ENCODE measurements at regions of chr14 and their contacts with region 1.

Region 1: DNA sequence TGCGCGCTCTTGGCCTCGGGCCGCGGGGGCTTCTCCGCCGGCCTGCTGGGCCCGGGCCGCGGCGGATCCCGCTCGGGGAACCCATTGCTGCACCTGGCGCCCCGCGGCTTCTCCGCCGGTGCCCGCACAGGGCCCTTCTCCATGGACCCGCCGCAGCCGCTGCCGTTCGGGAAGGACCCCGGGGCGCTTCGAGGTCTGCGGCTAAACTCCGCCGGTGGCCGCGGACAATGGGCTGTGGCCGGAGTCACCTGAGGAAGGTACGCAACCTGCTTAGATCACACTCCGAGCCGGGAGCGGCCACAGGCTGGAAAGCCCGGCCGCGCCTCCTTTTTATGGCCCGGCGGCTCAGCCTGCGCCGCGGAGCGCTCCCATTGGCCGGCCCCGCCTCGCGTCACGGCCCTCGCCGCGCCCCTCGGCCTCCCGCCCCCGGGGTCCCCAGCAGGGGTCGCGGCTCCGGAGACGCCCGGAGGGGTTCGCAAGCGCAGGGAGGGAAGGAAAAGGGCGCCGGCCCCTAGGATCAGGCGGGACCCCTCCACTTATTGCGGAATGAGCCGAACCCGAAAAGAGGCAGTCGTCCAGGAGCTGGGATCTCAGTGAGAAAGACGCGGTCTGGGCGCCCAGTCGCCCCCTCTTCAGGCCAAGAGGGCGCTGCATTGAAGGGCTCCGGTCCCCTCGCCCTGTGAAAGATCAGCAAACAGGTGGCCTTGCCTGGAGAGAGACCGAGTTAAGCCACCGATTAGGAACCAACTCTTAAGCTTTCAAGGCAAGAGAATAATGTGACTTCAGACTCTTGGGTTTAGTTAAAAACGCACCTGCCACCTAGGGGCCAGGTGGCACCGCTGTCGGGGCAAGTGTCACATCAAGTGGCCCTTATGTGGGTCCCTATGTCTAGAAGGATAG is at the start of gene GCH1:
- DNase-seq: peak; percentile 95
- H3K4me3 Mint-ChIP-seq: peak within 1 kb of the TSS; percentile 90
- H3K27ac Mint-ChIP-seq: peak within 1 kb of the TSS; percentile 88
- H3K4me1 Mint-ChIP-seq: peaks cover 31% of the 10 kb centered on the region
- H3K27me3 Mint-ChIP-seq: no peaks in the 10 kb centered on the region
- total RNA-seq, gene GCH1: 49.8 and 49.9 TPM in 2 replicates

Region 2: GRCh38 chr14:54435500-54435981 is 467.2 kb before region 1 on chr14:
- intact Hi-C with region 1: loop called (anchors 5 kb)
- DNase-seq: no peak
- H3K4me3 Mint-ChIP-seq: peak overlapping the region; percentile 74
- H3K27ac Mint-ChIP-seq: peak overlapping the region; percentile 89
- H3K4me1 Mint-ChIP-seq: peaks cover 62% of the 10 kb centered on the region
- H3K27me3 Mint-ChIP-seq: no peaks in the 10 kb centered on the region

Region 3: DNA sequence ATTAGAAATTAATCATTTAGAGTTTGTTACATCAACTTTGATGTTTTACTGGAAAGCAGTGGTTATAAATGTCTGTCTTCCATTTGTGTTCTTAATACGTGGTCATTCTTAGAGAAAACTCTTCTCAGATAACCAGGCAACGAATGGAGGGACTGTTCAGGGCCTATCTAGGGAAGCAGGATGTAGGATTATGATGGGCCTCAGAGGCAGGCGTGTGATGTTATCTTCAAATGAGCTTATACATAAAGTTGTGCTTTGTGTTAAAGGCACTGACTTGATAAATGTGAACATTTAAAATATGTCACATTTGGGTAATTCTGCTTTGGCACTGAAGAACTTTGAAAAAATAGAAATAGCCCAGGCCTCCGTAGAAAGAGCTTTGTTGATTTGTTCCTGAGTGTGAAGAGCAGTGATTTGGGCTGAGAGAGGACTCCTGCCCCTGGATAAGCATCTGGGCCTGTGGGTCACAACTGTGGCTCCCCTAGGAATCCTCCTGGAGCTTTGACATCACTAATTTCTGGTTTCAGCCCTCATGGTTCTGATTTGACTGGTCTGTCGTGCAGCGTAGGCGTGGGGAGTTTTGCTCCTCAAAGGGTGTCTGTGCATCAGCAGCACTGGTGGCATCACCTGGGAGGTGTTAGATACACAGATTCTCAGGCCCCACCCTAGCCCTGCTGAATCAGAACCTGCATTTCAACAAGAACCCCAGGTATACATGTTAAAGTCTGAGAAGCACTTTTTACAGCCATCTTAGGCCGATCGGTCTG is 280.4 kb before region 1 on chr14:
- intact Hi-C with region 1: no loop called
- DNase-seq: peak; percentile 63
- H3K4me3 Mint-ChIP-seq: no peak overlapping the region
- H3K27ac Mint-ChIP-seq: no peak overlapping the region
- H3K4me1 Mint-ChIP-seq: peaks cover 28% of the 10 kb centered on the region
- H3K27me3 Mint-ChIP-seq: no peaks in the 10 kb centered on the region

Region 4: GRCh38 chr14:54730156-54730961 is 172.4 kb before region 1 on chr14:
- intact Hi-C with region 1: loop called (anchors 1 kb)
- DNase-seq: peak; percentile 84
- H3K4me3 Mint-ChIP-seq: peak overlapping the region; percentile 70
- H3K27ac Mint-ChIP-seq: peak overlapping the region; percentile 88
- H3K4me1 Mint-ChIP-seq: peaks cover 40% of the 10 kb centered on the region
- H3K27me3 Mint-ChIP-seq: peaks cover 28% of the 10 kb centered on the region

Region 5: GRCh38 chr14:55026793-55027561 is 124.2 kb after region 1 on chr14 and contains the starts of genes SOCS4 and WDHD1:
- intact Hi-C with region 1: loop called (anchors 1 kb)
- DNase-seq: peak; percentile 99
- H3K4me3 Mint-ChIP-seq: peak within 1 kb of the TSS; percentile 87
- H3K27ac Mint-ChIP-seq: peak within 1 kb of the TSS; percentile 96
- H3K4me1 Mint-ChIP-seq: peaks cover 44% of the 10 kb centered on the region
- H3K27me3 Mint-ChIP-seq: no peaks in the 10 kb centered on the region
- total RNA-seq, gene SOCS4: 36.4 and 39.6 TPM in 2 replicates
- total RNA-seq, gene WDHD1: 60.7 and 63.0 TPM in 2 replicates

Region 6: DNA sequence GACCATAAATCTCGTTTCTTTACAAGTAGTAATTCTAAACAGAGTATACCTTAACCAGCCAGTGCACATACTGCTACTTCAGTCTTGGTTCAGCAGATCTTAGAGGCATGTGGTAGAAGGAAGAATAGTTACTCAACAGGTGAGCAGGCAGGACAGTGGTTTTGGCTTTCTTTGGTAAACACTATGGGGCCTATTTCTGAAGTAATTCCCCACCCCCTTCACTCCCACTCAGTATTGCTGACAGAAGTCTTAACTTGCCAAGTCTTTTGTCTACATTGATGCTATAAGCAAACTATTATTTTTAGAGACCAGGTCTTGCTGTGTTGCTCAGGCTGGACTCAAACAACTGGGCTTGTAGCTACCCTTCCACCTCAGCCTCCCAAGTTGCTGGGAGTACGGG is 437.0 kb after region 1 on chr14:
- intact Hi-C with region 1: loop called (anchors 5 kb)
- DNase-seq: peak; percentile 71
- H3K4me3 Mint-ChIP-seq: peak overlapping the region; percentile 47
- H3K27ac Mint-ChIP-seq: peak overlapping the region; percentile 84
- H3K4me1 Mint-ChIP-seq: peaks cover 60% of the 10 kb centered on the region
- H3K27me3 Mint-ChIP-seq: no peaks in the 10 kb centered on the region